PC-9 (cell line): ENCODE measurements at regions of chr2 and their contacts with region 1.

Region 1: GRCh38 chr2:65186872-65187851 is 40.5 kb upstream of the ACTR2 start:
- DNase-seq: peak; percentile 52 to 57
- H3K4me3 ChIP-seq: no peak overlapping the region
- H3K27ac ChIP-seq: no peak overlapping the region
- H3K4me1 ChIP-seq: no peaks in the 10 kb centered on the region
- H3K27me3 ChIP-seq: no peaks in the 10 kb centered on the region
- CTCF ChIP-seq: peak; percentile 81

Region 2: DNA sequence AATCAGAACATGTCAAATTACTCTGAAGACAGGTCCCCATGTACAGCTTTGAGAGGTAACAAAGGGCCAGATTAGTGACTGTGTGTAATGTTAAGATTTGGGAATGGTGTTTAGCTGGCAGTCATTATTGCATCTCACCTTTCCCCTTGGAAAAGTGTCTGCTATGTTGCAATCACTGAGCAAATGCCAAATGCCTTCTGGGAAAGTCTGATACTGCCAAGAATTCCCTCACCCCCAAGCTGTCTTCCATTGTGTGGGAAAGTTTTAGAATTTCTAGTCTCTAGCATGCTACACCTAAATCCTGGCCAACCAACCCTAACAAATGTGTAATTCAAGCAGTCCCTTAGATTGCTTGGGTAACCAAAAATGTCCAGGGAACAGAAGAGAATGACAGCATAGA is 1029.4 kb before region 1 on chr2:
- CTCF ChIA-PET with region 1: no interaction called
- POLR2A ChIA-PET with region 1: interaction called, 34 read pairs
- intact Hi-C with region 1: no loop called
- DNase-seq: peak; percentile 14 to 49
- H3K4me3 ChIP-seq: no peak overlapping the region
- H3K27ac ChIP-seq: no peak overlapping the region; the same call in 1 of the 2 replicates
- H3K4me1 ChIP-seq: peaks cover 14% of the 10 kb centered on the region
- H3K27me3 ChIP-seq: no peaks in the 10 kb centered on the region
- CTCF ChIP-seq: no peak

Region 3: GRCh38 chr2:65064728-65065552 is 122.2 kb before region 1 on chr2:
- CTCF ChIA-PET with region 1: interaction called, 4 read pairs
- POLR2A ChIA-PET with region 1: no interaction called
- intact Hi-C with region 1: loop called (anchors 1 kb)
- DNase-seq: peak in 1 of 2 experiments; percentile 22
- H3K4me3 ChIP-seq: no peak overlapping the region
- H3K27ac ChIP-seq: peak overlapping the region; percentile 2; the same call in 1 of the 2 replicates
- H3K4me1 ChIP-seq: peaks cover 17% of the 10 kb centered on the region
- H3K27me3 ChIP-seq: no peaks in the 10 kb centered on the region
- CTCF ChIP-seq: peak; percentile 66

Region 4: DNA sequence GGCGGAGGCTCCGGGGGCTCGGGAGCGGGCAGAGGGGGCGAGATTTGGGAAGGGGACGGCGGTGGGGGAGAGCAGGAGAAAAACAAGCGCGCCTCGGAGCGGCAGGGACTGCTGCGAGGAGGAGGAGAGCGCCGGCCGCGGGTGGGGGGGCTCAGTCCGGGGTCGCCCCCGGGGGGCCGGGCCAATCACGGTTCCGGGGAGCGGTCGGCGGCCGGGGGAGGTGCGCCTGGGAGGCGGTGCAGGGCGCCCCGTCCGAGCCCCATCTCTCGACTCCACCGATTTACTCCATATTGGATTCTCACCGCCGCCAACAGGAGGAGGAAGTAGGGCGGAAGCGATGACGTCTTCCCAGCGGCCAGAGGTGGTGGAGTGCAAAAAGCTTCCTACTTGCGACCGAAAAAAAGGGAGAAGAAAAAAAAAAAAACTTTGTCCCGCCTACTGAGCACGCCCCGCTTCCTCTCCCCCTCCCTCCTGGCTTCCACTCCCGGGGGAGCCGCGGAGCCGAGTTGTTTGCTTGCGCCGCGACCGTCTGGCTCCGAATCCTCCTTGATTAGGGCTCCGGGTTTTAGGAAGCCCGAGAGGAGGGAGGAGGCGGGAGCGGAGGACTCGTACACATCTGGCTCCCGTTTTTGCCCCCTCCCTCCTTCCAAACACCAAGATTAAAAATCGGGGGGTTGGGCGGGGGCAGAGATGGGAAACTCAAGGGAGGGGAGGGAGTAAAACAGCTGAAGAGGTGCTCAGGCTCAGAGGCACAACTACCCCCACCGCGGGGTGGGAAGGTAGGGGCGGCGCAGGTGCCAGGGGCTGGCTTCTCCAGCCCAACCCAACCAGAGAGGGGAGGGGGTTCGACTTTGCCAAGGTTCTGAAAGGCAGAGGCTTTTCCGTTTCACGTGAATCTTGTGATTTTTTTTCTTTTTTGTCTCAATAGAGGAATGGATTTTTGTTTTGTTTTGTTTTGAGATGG is 245.3 kb after region 1 on chr2 and contains the start of gene SPRED2:
- CTCF ChIA-PET with region 1: no interaction called
- POLR2A ChIA-PET with region 1: no interaction called
- intact Hi-C with region 1: no loop called
- DNase-seq: peak; percentile 92
- H3K4me3 ChIP-seq: peak within 1 kb of the TSS; percentile 91
- H3K27ac ChIP-seq: peak within 1 kb of the TSS; percentile 59
- H3K4me1 ChIP-seq: peaks cover 55% of the 10 kb centered on the region
- H3K27me3 ChIP-seq: no peaks in the 10 kb centered on the region
- CTCF ChIP-seq: no peak
- total RNA-seq, gene SPRED2: 33.5 and 33.6 TPM in 2 replicates